Natural killer cell (primary cell): ENCODE measurements at regions of chr21 and their contacts with region 1.

Region 1: GRCh38 chr21:42737951-42738590 is 84.7 kb downstream of the PDE9A start:
- DNase-seq: peak in 1 of 2 donors; percentile 59
- ATAC-seq: peak in 2 of 3 donors; percentile 72 to 86
- H3K4me3 ChIP-seq: no peak overlapping the region
- H3K4me3 Mint-ChIP-seq: no peak overlapping the region
- H3K27ac ChIP-seq: peak overlapping the region; percentile 86
- H3K27ac Mint-ChIP-seq: peak overlapping the region in 1 of 2 donors; percentile 98
- H3K4me1 ChIP-seq: peaks cover 19% of the 10 kb centered on the region
- H3K4me1 Mint-ChIP-seq: peaks cover 7 to 40% of the 10 kb centered on the region in 2 donors
- H3K27me3 ChIP-seq: no peaks in the 10 kb centered on the region
- H3K27me3 Mint-ChIP-seq: no peaks in the 10 kb centered on the region
- CTCF ChIP-seq: no peak

Region 2: GRCh38 chr21:42460391-42461204 is 277.5 kb before region 1 on chr21:
- intact Hi-C with region 1: no loop called
- DNase-seq: peak in 1 of 2 donors; percentile 78
- ATAC-seq: no peak
- H3K4me3 ChIP-seq: no peak overlapping the region
- H3K4me3 Mint-ChIP-seq: no peak overlapping the region
- H3K27ac ChIP-seq: peak overlapping the region; percentile 56
- H3K27ac Mint-ChIP-seq: peak overlapping the region in 1 of 2 donors; percentile 55
- H3K4me1 ChIP-seq: peaks cover 41% of the 10 kb centered on the region
- H3K4me1 Mint-ChIP-seq: peaks cover 27 to 40% of the 10 kb centered on the region in 2 donors
- H3K27me3 ChIP-seq: no peaks in the 10 kb centered on the region
- H3K27me3 Mint-ChIP-seq: peaks cover 15 to 16% of the 10 kb centered on the region in 2 donors
- CTCF ChIP-seq: no peak

Region 3: DNA sequence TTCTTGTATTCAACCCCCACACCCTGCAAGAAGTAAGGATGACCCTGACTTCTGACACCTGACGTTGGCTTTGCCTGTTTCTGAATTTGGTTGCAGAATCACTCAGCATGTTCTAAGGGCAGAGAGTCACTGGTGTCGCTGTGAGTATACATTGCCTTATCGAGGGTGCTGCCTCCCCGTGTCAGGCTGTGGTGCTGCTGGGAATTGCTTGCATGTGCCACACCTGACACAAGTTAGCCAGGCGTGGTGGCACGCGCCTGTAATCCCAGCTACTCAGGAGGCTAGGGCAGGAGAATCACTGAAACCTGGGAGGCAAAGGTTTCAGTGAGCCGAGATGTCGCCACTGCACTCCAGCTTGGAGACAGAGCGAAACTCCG is 95.4 kb after region 1 on chr21:
- intact Hi-C with region 1: loop called (anchors 10 kb)
- DNase-seq: peak in 1 of 2 donors; percentile 75
- ATAC-seq: peak in 2 of 3 donors; percentile 47 to 58
- H3K4me3 ChIP-seq: no peak overlapping the region
- H3K4me3 Mint-ChIP-seq: peak overlapping the region; percentile 66
- H3K27ac ChIP-seq: no peak overlapping the region
- H3K27ac Mint-ChIP-seq: peak overlapping the region in 1 of 2 donors; percentile 40
- H3K4me1 ChIP-seq: peaks cover 30% of the 10 kb centered on the region
- H3K4me1 Mint-ChIP-seq: peaks cover 25 to 30% of the 10 kb centered on the region in 2 donors
- H3K27me3 ChIP-seq: peaks cover 10% of the 10 kb centered on the region
- H3K27me3 Mint-ChIP-seq: peaks cover 23 to 30% of the 10 kb centered on the region in 2 donors
- CTCF ChIP-seq: no peak